CD14-positive monocyte (primary cell): ENCODE measurements at regions of chr1 and their contacts with region 1.

Region 1: GRCh38 chr1:212260557-212261355 is 24.5 kb upstream of the PPP2R5A start:
- DNase-seq: peak; percentile 12 to 39 (median 13)
- H3K4me3 ChIP-seq: no peak overlapping the region
- H3K4me3 Mint-ChIP-seq: no peak overlapping the region
- H3K27ac ChIP-seq: peak overlapping the region in 1 of 2 donors; percentile 26
- H3K27ac Mint-ChIP-seq: peak overlapping the region; percentile 15 to 76 (median 42)
- H3K4me1 ChIP-seq: peaks cover 46 to 55% of the 10 kb centered on the region in 2 donors
- H3K4me1 Mint-ChIP-seq: peaks cover 57% of the 10 kb centered on the region
- H3K27me3 ChIP-seq: no peaks in the 10 kb centered on the region
- H3K27me3 Mint-ChIP-seq: no peaks in the 10 kb centered on the region
- CTCF ChIP-seq: no peak

Region 2: DNA sequence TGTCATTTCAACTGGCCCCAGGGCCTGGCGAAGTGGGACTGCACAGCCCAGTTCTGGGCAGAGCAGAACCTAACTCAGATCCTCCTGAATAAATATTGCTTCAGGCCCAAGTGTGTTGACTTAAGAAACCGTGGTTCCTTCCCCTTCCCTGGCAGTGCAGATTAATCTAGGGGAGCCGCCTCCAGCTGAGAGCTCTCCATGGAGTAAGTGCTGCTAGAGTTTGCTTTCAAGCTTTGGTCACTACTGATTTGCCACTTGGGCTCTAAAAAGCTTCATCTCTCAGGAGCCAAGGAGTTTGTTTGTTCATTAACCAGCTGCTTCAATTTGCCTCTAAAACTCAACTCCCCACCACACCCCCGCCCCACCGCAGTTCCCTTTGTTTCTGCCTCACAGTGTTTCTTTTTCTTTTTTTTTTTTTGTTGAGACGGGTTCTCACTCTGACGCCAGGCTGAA is 113.1 kb before region 1 on chr1:
- intact Hi-C with region 1: no loop called
- DNase-seq: no peak
- H3K4me3 ChIP-seq: no peak overlapping the region
- H3K4me3 Mint-ChIP-seq: no peak overlapping the region
- H3K27ac ChIP-seq: no peak overlapping the region
- H3K27ac Mint-ChIP-seq: peak overlapping the region in 1 of 7 donors; percentile 53
- H3K4me1 ChIP-seq: peaks cover 3 to 10% of the 10 kb centered on the region in 2 donors
- H3K4me1 Mint-ChIP-seq: peaks cover 6% of the 10 kb centered on the region
- H3K27me3 ChIP-seq: no peaks in the 10 kb centered on the region
- H3K27me3 Mint-ChIP-seq: peaks cover 0 to 2% (median 0%) of the 10 kb centered on the region in 3 donors
- CTCF ChIP-seq: no peak

Region 3: DNA sequence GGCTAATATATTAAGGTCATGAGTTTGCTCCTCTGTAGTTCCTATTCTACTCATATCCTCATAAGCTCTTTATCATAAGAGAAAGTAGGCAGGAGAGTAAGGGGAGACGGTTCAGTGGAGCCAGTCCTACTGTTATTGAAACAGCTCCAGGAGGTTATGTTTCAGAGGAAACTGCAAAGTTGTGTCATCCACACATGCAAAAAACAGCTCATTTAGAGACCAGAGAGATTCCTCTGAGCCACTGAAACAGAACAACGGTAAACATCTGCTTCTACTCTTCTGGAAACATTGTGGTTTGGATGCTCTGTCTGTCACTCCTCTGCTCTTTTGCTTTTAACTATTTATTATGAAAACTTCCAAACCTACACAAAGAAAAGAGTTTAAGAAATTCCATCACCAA is 41.8 kb before region 1 on chr1:
- intact Hi-C with region 1: loop called in 1 of 2 experiments (anchors 5 kb)
- DNase-seq: no peak
- H3K4me3 ChIP-seq: no peak overlapping the region
- H3K4me3 Mint-ChIP-seq: no peak overlapping the region
- H3K27ac ChIP-seq: no peak overlapping the region
- H3K27ac Mint-ChIP-seq: no peak overlapping the region
- H3K4me1 ChIP-seq: no peaks in the 10 kb centered on the region
- H3K4me1 Mint-ChIP-seq: peaks cover 8% of the 10 kb centered on the region
- H3K27me3 ChIP-seq: no peaks in the 10 kb centered on the region
- H3K27me3 Mint-ChIP-seq: peaks cover 1 to 4% (median 1%) of the 10 kb centered on the region in 3 donors
- CTCF ChIP-seq: no peak

Region 4: DNA sequence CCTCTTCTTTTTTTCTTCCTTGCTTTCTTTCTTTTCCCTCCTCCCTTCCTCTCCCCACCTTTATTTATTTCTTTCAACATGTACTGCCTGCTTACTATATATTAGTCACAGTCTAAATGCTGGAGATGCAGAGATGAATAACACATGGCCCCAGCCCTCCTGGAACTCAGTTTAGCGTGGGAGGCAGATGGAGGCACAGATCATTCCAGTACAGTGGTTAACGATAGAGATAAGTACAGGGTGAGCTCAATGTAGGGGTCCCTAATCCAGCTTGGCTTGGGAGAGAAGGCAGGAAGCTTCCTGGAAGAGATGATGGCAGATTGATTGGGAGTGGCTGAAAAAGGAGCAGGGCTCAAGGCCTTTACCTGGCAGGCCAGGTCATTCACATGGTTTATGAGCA is 31.1 kb before region 1 on chr1:
- intact Hi-C with region 1: no loop called
- DNase-seq: no peak
- H3K4me3 ChIP-seq: no peak overlapping the region
- H3K4me3 Mint-ChIP-seq: no peak overlapping the region
- H3K27ac ChIP-seq: no peak overlapping the region
- H3K27ac Mint-ChIP-seq: no peak overlapping the region
- H3K4me1 ChIP-seq: peaks cover 33 to 42% of the 10 kb centered on the region in 2 donors
- H3K4me1 Mint-ChIP-seq: peaks cover 47% of the 10 kb centered on the region
- H3K27me3 ChIP-seq: no peaks in the 10 kb centered on the region
- H3K27me3 Mint-ChIP-seq: peaks cover 0 to 7% (median 3%) of the 10 kb centered on the region in 3 donors
- CTCF ChIP-seq: no peak